Posterior vena cava (tissue), 2 donors: ENCODE measurements at regions of chr6 and their contacts with region 1.

Region 1: DNA sequence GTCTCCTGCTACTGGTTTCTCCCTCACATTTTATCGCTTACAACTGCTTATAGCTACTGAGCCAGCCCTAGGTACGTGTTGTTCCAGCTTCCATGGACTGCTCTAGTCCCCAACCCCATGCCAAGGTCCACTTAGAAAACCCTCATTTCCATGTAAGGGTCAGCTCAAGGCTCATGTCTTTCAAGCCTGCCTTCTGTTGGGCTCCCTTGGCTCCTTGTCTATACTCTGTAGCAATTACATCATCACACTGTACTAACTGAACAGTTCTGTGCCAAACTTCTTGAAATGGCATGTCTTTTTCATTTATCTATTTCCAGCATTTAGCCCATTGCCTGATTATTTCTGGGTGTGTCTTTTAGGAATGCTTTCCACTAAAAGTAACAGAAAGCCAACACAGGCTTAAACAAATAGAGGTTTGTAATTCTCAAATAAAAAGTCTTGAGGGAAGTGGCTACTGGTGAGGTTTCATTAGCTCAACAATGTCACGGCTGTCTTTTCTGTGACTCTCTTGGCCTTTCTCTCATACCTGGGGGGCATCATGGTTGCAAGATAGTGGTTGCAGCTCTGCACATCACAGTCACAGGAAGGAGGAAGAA is 317.6 kb downstream of the TPBG start:
- DNase-seq: no peak

Region 2: DNA sequence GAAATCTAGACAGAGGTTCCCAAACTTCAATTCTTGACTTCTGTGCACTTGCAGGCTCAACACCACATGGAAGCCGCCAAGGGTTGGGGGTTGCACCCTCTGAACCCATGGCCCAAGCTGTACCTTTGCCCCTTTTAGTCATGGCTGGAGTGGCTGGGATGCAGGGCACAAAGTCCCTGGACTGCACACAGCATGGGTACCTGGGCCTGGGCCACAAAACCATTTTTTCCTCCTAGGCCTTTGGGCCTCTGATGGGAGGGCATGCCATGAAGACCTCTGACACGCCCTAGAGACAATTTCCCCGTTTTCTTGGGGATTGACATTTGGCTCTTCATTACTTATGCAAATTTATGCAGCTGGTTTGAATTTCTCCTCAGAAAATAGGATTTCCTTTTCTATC is 24.4 kb after region 1 on chr6:
- intact Hi-C with region 1: loop called in 1 of 2 experiments (anchors 1 kb)
- DNase-seq: peak; percentile 50